MCF 10A (cell line): ENCODE measurements at regions of chr15 and their contacts with region 1.

Region 1: DNA sequence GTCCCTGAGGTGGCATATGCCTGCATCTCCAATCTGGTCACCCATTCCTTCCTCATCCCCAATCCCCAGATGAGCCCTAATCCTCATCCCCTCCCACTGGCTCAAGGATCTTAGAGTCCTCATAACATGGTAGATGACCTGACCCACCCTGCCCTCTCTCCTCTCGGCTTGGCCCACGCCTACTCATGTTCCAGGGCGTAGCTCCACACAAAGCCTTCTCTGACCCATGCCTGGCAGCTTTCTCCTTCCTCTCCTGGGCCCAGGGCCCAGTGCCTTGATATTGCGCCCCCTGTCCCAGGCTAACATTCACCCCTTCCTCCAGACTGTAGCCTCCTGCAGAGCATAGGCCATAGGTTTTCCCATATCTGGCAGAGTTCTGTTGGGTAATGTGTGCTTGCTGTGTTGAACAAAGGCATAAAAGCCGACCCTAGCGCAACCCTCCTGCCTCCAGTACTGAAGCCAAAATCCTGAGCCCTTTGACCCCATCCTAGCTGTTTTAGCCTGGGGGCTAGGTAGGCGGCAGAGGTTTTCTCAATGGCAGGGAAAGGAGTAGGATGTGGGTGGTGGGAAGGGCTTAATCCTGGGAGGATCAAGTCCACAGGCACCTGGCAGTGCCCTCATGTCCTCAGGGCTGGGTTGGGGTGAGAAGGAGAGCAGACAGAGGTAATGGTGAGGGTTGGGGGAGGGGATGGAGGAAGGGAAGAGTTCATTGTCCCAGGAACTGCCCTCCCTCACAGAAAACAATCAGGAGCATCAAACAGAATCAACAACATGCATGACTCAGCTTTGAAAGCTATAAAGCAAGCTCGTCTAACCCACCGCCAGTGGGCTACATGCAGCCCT is 35.5 kb downstream of the MESD start:
- DNase-seq: peak; percentile 96
- H3K4me3 Mint-ChIP-seq: peak overlapping the region; percentile 25
- H3K27ac Mint-ChIP-seq: peak overlapping the region; percentile 81
- H3K4me1 Mint-ChIP-seq: peaks cover 44% of the 10 kb centered on the region
- H3K27me3 Mint-ChIP-seq: no peaks in the 10 kb centered on the region
- CTCF ChIP-seq: no peak

Region 2: DNA sequence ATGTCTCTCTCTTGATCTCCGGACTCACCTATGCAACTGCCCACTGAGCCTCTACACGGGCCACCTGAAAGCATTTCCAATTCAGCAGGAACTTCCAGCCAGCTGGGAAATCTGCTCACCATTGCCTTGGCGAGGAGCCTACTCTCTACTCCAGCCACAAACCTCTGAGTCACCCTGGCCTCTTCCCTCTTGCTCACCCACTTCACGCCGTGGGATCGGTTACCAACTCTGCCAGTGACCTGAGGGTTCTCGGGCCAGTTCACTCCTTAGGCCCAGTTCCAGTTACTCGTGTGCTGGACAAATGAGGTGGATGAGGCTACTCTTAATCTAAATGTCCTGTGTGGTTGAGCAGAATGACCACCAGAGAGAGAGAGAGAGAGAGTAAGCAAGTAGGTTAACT is 104.8 kb before region 1 on chr15:
- CTCF ChIA-PET with region 1: no interaction called
- POLR2A ChIA-PET with region 1: no interaction called
- intact Hi-C with region 1: loop called (anchors 10 kb)
- DNase-seq: peak; percentile 93
- H3K4me3 Mint-ChIP-seq: no peak overlapping the region
- H3K27ac Mint-ChIP-seq: no peak overlapping the region
- H3K4me1 Mint-ChIP-seq: peaks cover 34% of the 10 kb centered on the region
- H3K27me3 Mint-ChIP-seq: no peaks in the 10 kb centered on the region
- CTCF ChIP-seq: no peak

Region 3: DNA sequence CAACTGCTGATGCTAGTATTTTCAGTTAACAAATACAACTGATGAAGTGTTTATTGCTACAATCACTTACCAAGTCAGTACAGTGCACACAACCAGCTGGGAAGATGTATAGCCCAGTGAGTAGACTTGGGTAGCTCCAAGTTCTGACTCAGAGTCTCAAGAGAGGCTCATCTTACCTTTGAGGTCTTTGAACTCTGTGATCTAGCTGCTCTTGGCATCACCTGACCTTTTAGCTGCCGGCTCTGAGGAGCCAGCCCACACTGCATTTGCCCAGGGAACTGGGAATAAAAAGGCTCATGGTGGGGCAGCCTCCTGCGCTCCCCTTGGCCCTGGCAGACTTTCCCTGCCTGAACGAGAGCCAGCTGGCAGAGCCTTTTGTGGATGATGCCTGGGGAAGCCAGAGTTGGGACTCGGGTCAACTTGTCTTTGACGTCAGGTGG is 92.4 kb before region 1 on chr15:
- CTCF ChIA-PET with region 1: no interaction called
- POLR2A ChIA-PET with region 1: no interaction called
- intact Hi-C with region 1: no loop called
- DNase-seq: peak; percentile 76
- H3K4me3 Mint-ChIP-seq: no peak overlapping the region
- H3K27ac Mint-ChIP-seq: no peak overlapping the region
- H3K4me1 Mint-ChIP-seq: peaks cover 9% of the 10 kb centered on the region
- H3K27me3 Mint-ChIP-seq: peaks cover 10% of the 10 kb centered on the region
- CTCF ChIP-seq: no peak

Region 4: GRCh38 chr15:81015621-81016488 is 61.7 kb after region 1 on chr15:
- CTCF ChIA-PET with region 1: no interaction called
- POLR2A ChIA-PET with region 1: no interaction called
- intact Hi-C with region 1: no loop called
- DNase-seq: no peak
- H3K4me3 Mint-ChIP-seq: no peak overlapping the region
- H3K27ac Mint-ChIP-seq: no peak overlapping the region
- H3K4me1 Mint-ChIP-seq: peaks cover 6% of the 10 kb centered on the region
- H3K27me3 Mint-ChIP-seq: no peaks in the 10 kb centered on the region
- CTCF ChIP-seq: no peak